Mammary epithelial cell (primary cell): ENCODE measurements at regions of chr1 and their contacts with region 1.

Region 1: GRCh38 chr1:64242895-64243756 is 39.7 kb downstream of the UBE2U start:
- DNase-seq: peak; percentile 31
- H3K4me3 ChIP-seq: no peak overlapping the region
- H3K27ac ChIP-seq: no peak overlapping the region
- H3K4me1 ChIP-seq: no peaks in the 10 kb centered on the region
- H3K27me3 ChIP-seq: no peaks in the 10 kb centered on the region
- CTCF ChIP-seq: peak; percentile 44 to 54

Region 2: DNA sequence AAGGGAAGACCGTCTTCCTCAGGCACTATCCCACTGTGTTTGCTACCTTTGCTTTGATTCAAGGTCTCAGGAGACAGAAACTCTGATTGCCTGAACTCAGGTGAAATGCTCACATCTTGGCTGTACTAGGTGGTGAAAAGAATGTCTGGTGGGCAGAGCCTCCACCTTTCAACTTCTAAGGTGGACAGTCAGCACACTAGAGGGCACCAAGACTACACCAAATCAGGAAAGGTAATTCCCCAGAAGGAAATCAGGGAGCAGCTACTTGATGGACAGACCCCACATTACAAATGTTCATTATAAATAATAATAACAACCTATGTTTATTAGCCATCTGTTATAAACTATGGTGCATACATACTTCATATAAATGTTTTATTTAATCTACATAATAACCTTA is 1238.3 kb before region 1 on chr1:
- CTCF ChIA-PET with region 1: interaction called, 3 read pairs
- dilution Hi-C with region 1: no loop called
- in situ Hi-C with region 1: no loop called
- intact Hi-C with region 1: loop called (anchors 10 kb)
- DNase-seq: no peak
- H3K4me3 ChIP-seq: no peak overlapping the region
- H3K27ac ChIP-seq: no peak overlapping the region
- H3K4me1 ChIP-seq: no peaks in the 10 kb centered on the region
- H3K27me3 ChIP-seq: no peaks in the 10 kb centered on the region
- CTCF ChIP-seq: peak; percentile 18 to 38

Region 3: GRCh38 chr1:63575340-63575826 is 667.7 kb before region 1 on chr1:
- CTCF ChIA-PET with region 1: no interaction called
- dilution Hi-C with region 1: no loop called
- in situ Hi-C with region 1: no loop called
- intact Hi-C with region 1: loop called (anchors 5 kb)
- DNase-seq: peak; percentile 32
- H3K4me3 ChIP-seq: no peak overlapping the region
- H3K27ac ChIP-seq: no peak overlapping the region
- H3K4me1 ChIP-seq: peaks cover 8% of the 10 kb centered on the region
- H3K27me3 ChIP-seq: no peaks in the 10 kb centered on the region
- CTCF ChIP-seq: peak; percentile 57 to 59

Region 4: GRCh38 chr1:63674238-63674864 is 568.8 kb before region 1 on chr1:
- CTCF ChIA-PET with region 1: no interaction called
- dilution Hi-C with region 1: no loop called
- in situ Hi-C with region 1: no loop called
- intact Hi-C with region 1: loop called (anchors 1 kb)
- DNase-seq: peak; percentile 85
- H3K4me3 ChIP-seq: no peak overlapping the region
- H3K27ac ChIP-seq: no peak overlapping the region
- H3K4me1 ChIP-seq: peaks cover 13% of the 10 kb centered on the region
- H3K27me3 ChIP-seq: no peaks in the 10 kb centered on the region
- CTCF ChIP-seq: peak; percentile 76 to 77

Region 5: DNA sequence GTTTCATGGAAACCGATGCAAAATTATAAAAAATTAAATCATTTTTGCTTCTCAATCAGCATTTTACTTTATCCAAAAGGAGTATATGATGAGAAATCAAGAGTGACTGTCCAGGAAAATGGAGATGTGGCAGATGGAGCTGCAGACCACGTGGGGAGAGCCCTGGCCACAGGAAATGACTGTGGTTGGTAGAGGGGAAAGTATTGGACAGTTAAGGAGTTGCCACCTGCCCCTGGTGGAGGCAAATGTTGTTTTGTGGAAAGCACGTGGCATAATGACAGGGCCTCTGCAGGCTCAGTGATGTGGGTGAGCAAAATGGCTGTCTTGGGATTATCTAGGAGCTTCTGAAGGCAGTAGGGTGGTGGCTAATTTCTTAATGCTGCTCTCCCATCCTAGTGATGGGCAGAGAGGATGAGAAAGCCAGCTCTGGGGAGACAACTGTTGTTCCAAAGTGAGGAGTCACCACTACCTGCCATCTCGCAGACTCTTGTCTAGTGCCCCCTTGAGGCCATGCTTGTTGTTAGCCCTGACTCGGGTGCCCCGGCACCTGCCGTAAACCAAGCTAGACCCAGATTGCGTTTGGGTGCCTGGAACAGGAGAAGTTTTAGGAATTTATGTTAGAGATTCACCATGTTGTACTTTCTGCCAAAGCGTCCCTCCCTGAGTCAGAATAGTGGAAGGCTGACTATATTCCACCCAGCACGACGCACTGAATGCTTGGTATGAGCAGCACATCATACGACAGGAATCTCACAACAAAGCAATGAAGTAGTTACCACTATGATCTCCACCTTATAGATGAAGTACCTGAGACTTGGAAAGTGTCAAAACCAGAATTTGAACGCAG is 325.3 kb before region 1 on chr1:
- CTCF ChIA-PET with region 1: no interaction called
- dilution Hi-C with region 1: no loop called
- in situ Hi-C with region 1: no loop called
- intact Hi-C with region 1: loop called (anchors 5 kb)
- DNase-seq: no peak
- H3K4me3 ChIP-seq: no peak overlapping the region
- H3K27ac ChIP-seq: no peak overlapping the region
- H3K4me1 ChIP-seq: peaks cover 35% of the 10 kb centered on the region
- H3K27me3 ChIP-seq: no peaks in the 10 kb centered on the region
- CTCF ChIP-seq: peak; percentile 31 to 33

Region 6: DNA sequence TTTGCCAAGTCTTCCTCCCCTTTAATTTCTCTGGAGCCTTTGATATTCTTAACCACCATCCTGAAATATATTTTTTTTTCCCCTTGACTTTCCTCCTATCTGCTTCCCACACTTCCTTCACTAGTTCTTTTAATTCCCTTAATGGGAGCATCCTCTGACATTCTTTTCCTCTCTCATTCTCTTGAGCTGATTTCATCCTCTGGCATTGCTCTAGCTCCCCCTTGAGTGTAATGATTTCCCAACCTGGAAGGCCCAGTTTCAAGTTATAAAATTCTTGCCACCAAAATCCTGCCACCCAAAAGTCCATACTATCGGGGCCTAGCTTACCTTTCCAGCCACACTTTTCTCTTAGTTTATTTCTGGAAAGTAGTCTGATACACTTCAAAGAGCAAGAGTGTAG is 79.2 kb before region 1 on chr1:
- CTCF ChIA-PET with region 1: interaction called, 3 read pairs
- dilution Hi-C with region 1: no loop called
- in situ Hi-C with region 1: no loop called
- intact Hi-C with region 1: loop called (anchors 5 kb)
- DNase-seq: peak; percentile 26
- H3K4me3 ChIP-seq: no peak overlapping the region
- H3K27ac ChIP-seq: no peak overlapping the region
- H3K4me1 ChIP-seq: no peaks in the 10 kb centered on the region
- H3K27me3 ChIP-seq: no peaks in the 10 kb centered on the region
- CTCF ChIP-seq: peak; percentile 24 to 61